GM12878 (cell line): ENCODE measurements at regions of chr16 and their contacts with region 1.

Region 1: DNA sequence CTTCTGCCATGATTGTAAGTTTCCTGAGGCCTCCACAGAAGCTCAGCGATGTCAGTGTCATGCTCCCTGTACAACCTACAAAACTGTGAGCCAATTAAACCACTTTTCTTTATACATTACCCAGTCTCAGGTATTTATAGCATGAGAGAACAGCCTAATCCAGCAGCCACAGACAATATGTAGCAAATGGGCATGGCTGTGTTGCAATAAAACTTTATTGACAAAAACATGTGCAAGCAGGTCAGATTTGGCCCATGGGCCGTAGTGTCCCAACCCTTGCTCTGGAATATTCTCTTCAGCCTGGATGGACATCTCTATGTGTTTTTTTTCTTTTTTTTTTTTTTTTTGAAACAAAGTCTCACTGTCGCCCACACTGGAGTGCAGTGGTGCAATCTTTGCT is 60.9 kb upstream of the EEF2KMT start:
- DNase-seq: no peak
- ATAC-seq: no peak
- H3K4me3 ChIP-seq: no peak overlapping the region
- H3K27ac ChIP-seq: 0 out of 2 replicates have a peak overlapping the region, but pooled peaks have one; percentile 27
- H3K4me1 ChIP-seq: peaks cover 32% of the 10 kb centered on the region
- H3K27me3 ChIP-seq: no peaks in the 10 kb centered on the region
- CTCF ChIP-seq: no peak
- EP300 ChIP-seq: no peak
- POLR2A ChIP-seq: no peak
- RAD21 ChIP-seq: no peak

Region 2: GRCh38 chr16:5108505-5109158 is 49.9 kb before region 1 on chr16:
- CTCF ChIA-PET with region 1: no interaction called
- POLR2A ChIA-PET with region 1: no interaction called
- RAD21 ChIA-PET with region 1: no interaction called
- SMC1A ChIA-PET with region 1: no interaction called
- in situ Hi-C with region 1: no loop called
- intact Hi-C with region 1: no loop called
- DNase-seq: no peak
- ATAC-seq: no peak
- H3K4me3 ChIP-seq: no peak overlapping the region
- H3K27ac ChIP-seq: no peak overlapping the region
- H3K4me1 ChIP-seq: no peaks in the 10 kb centered on the region
- H3K27me3 ChIP-seq: no peaks in the 10 kb centered on the region
- CTCF ChIP-seq: no peak
- EP300 ChIP-seq: no peak
- POLR2A ChIP-seq: no peak
- RAD21 ChIP-seq: no peak

Region 3: DNA sequence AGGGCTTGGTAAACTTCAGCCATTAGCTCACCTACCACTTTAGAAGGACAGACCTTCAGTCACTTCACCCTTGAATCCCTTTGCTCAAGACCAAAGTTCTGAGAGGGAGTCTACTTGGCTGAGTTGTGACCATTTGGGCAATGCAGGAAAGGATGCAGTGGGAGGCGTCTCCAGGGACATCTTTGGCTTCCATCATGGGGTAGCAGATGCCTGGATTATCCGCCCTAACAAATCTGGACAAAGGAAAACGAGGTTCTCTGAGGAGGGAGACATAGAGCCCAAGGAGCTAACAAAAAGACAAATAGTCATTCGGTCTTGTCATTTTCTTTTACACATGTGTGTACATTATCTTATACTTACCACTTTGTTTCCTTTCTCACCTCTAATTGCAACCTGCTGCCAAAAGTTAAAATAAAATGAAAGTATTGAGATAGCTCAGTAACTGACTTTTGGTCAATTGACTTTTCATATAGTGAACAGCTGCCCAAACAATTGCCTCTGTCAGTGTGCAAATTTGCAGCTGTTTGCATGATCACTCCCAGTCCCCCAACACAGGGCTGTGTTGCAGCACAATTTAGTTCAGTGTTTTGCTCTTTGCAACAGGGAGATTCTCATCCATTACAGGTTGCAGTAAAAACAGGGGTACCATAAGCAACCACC is 48.0 kb after region 1 on chr16:
- CTCF ChIA-PET with region 1: no interaction called
- POLR2A ChIA-PET with region 1: interaction called, 5 read pairs
- RAD21 ChIA-PET with region 1: interaction called, 3 read pairs
- SMC1A ChIA-PET with region 1: interaction called, 4 read pairs
- in situ Hi-C with region 1: no loop called
- intact Hi-C with region 1: loop called (anchors 5 kb)
- DNase-seq: no peak
- ATAC-seq: no peak
- H3K4me3 ChIP-seq: no peak overlapping the region
- H3K27ac ChIP-seq: no peak overlapping the region
- H3K4me1 ChIP-seq: 0 out of 2 replicates have a peak, but pooled peaks cover 9% of the 10 kb centered on the region
- H3K27me3 ChIP-seq: no peaks in the 10 kb centered on the region
- CTCF ChIP-seq: no peak
- EP300 ChIP-seq: peak in 1 of 2 experiments; percentile 34; a peak in 1 of 4 replicates
- POLR2A ChIP-seq: no peak
- RAD21 ChIP-seq: no peak

Region 4: GRCh38 chr16:5354645-5355044 is 196.2 kb after region 1 on chr16:
- CTCF ChIA-PET with region 1: no interaction called
- POLR2A ChIA-PET with region 1: no interaction called
- RAD21 ChIA-PET with region 1: no interaction called
- SMC1A ChIA-PET with region 1: no interaction called
- in situ Hi-C with region 1: no loop called
- intact Hi-C with region 1: no loop called
- DNase-seq: no peak
- ATAC-seq: no peak
- H3K4me3 ChIP-seq: no peak overlapping the region
- H3K27ac ChIP-seq: no peak overlapping the region
- H3K4me1 ChIP-seq: no peaks in the 10 kb centered on the region
- H3K27me3 ChIP-seq: no peaks in the 10 kb centered on the region
- CTCF ChIP-seq: no peak
- EP300 ChIP-seq: no peak
- POLR2A ChIP-seq: no peak
- RAD21 ChIP-seq: no peak

Region 5: GRCh38 chr16:5551909-5552308 is 393.4 kb after region 1 on chr16:
- CTCF ChIA-PET with region 1: no interaction called
- POLR2A ChIA-PET with region 1: no interaction called
- RAD21 ChIA-PET with region 1: no interaction called
- SMC1A ChIA-PET with region 1: no interaction called
- in situ Hi-C with region 1: no loop called
- intact Hi-C with region 1: no loop called
- DNase-seq: no peak
- ATAC-seq: no peak
- H3K4me3 ChIP-seq: no peak overlapping the region
- H3K27ac ChIP-seq: no peak overlapping the region
- H3K4me1 ChIP-seq: no peaks in the 10 kb centered on the region
- H3K27me3 ChIP-seq: no peaks in the 10 kb centered on the region
- CTCF ChIP-seq: no peak
- EP300 ChIP-seq: no peak
- POLR2A ChIP-seq: no peak
- RAD21 ChIP-seq: no peak